Gastrocnemius medialis (tissue), 4 donors: ENCODE measurements at regions of chr20 and their contacts with region 1.

Region 1: GRCh38 chr20:22303523-22303922 is 280.8 kb downstream of the FOXA2 start:
- DNase-seq: no peak
- ATAC-seq: no peak
- H3K4me3 ChIP-seq: no peak overlapping the region
- H3K27ac ChIP-seq: no peak overlapping the region
- H3K4me1 ChIP-seq: no peaks in the 10 kb centered on the region
- H3K27me3 ChIP-seq: no peaks in the 10 kb centered on the region
- CTCF ChIP-seq: no peak
- POLR2A ChIP-seq: no peak

Region 2: DNA sequence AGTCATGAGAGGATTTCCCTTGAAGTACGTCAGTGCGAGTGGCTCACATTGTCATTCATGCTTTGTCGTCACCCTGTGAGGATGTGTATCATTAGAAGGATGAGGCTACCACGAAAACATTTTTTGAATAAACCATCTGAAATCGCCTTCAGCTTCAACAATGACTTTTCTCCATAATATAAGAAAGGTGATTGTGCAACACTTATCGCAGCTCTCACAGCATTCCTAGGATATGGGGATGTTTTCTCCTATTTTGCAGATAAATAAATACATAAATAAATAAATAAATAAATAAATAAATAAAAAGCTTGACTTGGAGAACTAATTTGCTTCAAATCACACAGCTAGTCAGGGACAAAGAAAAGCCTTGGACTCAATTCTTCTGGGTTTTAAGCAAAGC is 45.6 kb before region 1 on chr20:
- in situ Hi-C with region 1: loop called in 1 of 4 experiments (anchors 10 kb)
- intact Hi-C with region 1: no loop called
- DNase-seq: no peak
- ATAC-seq: no peak
- H3K4me3 ChIP-seq: no peak overlapping the region
- H3K27ac ChIP-seq: no peak overlapping the region
- H3K4me1 ChIP-seq: no peaks in the 10 kb centered on the region
- H3K27me3 ChIP-seq: no peaks in the 10 kb centered on the region
- CTCF ChIP-seq: no peak
- POLR2A ChIP-seq: no peak

Region 3: DNA sequence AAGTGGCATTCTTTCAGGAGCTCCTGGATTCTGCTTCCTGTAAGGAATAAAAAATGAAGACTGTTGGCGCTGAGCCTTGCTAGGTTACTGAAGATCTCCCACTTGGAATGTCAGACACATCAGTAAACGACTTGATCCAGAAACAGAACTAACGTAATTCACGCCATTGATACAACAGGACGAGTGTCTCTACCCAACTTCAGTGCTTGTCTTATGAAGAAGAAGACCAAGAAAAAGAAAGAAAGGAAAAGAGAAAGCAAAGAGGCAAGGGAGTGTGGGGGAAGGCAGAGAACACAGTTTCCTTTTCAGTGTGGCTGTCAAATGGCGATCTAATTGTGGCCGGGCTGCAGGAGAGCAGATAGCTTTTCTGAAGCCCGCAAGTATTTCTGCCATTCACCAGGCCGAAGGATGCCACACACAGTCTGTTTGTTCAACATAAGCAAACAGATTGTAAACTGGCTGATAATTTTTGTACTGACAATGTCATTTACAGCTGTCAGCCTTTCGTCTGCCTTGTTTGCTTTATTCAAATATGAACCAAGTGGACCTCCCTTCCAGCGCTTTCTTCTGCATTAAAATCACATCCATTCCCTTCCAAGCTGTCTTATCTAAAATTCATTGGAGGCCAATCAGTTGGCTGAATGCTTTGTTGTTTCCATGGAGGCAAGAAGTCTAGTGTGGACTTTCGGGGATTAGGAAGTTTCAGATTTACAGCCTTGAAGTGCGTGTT is 100.3 kb after region 1 on chr20:
- in situ Hi-C with region 1: no loop called
- intact Hi-C with region 1: no loop called
- DNase-seq: no peak
- ATAC-seq: peak; percentile 47 to 64
- H3K4me3 ChIP-seq: peak overlapping the region; percentile 33 to 39 (median 35)
- H3K27ac ChIP-seq: no peak overlapping the region
- H3K4me1 ChIP-seq: peaks cover 10 to 16% of the 10 kb centered on the region in 2 donors
- H3K27me3 ChIP-seq: no peaks in the 10 kb centered on the region
- CTCF ChIP-seq: no peak
- POLR2A ChIP-seq: no peak

Region 4: GRCh38 chr20:22691369-22692118 is 388.0 kb after region 1 on chr20:
- in situ Hi-C with region 1: no loop called
- intact Hi-C with region 1: no loop called
- DNase-seq: peak; percentile 41 to 58
- ATAC-seq: peak; percentile 88 to 90
- H3K4me3 ChIP-seq: peak overlapping the region; percentile 15 to 48 (median 37)
- H3K27ac ChIP-seq: no peak overlapping the region
- H3K4me1 ChIP-seq: peaks cover 6 to 12% of the 10 kb centered on the region in 2 donors
- H3K27me3 ChIP-seq: no peaks in the 10 kb centered on the region
- CTCF ChIP-seq: peak; percentile 83 to 93 (median 89)
- POLR2A ChIP-seq: no peak